Adrenal gland (tissue), 19 donors: ENCODE measurements at regions of chr7 and their contacts with region 1.

Region 1: GRCh38 chr7:156889089-156889488 is 3.9 kb downstream of the LMBR1 start:
- DNase-seq: no peak
- H3K4me3 ChIP-seq: no peak overlapping the region
- H3K27ac ChIP-seq: no peak overlapping the region
- H3K4me1 ChIP-seq: peaks cover 16 to 18% of the 10 kb centered on the region in 2 donors
- H3K27me3 ChIP-seq: no peaks in the 10 kb centered on the region
- CTCF ChIP-seq: no peak
- POLR2A ChIP-seq: no peak

Region 2: GRCh38 chr7:156842740-156843140 is 46.3 kb before region 1 on chr7:
- intact Hi-C with region 1: loop called in 1 of 2 experiments (anchors 5 kb)
- DNase-seq: peak in 2 of 7 donors; percentile 12 to 15
- H3K4me3 ChIP-seq: peak overlapping the region in 1 of 4 donors; percentile 2
- H3K27ac ChIP-seq: peak overlapping the region in 4 of 5 donors; percentile 19 to 61 (median 56)
- H3K4me1 ChIP-seq: peaks cover 18 to 57% of the 10 kb centered on the region in 2 donors
- H3K27me3 ChIP-seq: no peaks in the 10 kb centered on the region
- CTCF ChIP-seq: no peak
- POLR2A ChIP-seq: no peak